CD8-positive, alpha-beta T cell (primary cell): ENCODE measurements at regions of chr1 and their contacts with region 1.

Region 1: DNA sequence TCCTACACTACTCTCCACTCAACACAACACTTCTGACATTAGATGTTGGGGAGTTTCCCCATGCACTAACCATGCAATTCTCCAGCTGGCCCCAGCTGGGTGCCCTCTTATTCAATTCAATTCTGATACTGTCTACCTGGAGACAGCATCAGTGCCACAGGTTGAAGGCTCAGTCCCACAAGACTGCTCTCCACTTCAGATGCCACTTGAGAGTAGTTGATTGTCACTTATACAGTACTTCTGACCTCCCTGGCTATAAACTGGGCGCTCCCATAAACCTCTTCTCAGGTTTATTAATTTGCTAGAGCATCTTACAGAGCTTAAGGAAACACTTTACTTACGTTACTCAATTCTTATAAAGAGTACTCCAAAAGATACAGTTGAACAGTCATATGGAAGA is 442.3 kb downstream of the LRRIQ3 start:
- DNase-seq: no peak
- ATAC-seq: no peak
- H3K4me3 ChIP-seq: no peak overlapping the region
- H3K4me3 Mint-ChIP-seq: no peak overlapping the region
- H3K27ac ChIP-seq: no peak overlapping the region
- H3K27ac Mint-ChIP-seq: no peak overlapping the region
- H3K4me1 ChIP-seq: no peaks in the 10 kb centered on the region
- H3K4me1 Mint-ChIP-seq: no peaks in the 10 kb centered on the region
- H3K27me3 ChIP-seq: no peaks in the 10 kb centered on the region
- H3K27me3 Mint-ChIP-seq: no peaks in the 10 kb centered on the region
- CTCF ChIP-seq: no peak

Region 2: DNA sequence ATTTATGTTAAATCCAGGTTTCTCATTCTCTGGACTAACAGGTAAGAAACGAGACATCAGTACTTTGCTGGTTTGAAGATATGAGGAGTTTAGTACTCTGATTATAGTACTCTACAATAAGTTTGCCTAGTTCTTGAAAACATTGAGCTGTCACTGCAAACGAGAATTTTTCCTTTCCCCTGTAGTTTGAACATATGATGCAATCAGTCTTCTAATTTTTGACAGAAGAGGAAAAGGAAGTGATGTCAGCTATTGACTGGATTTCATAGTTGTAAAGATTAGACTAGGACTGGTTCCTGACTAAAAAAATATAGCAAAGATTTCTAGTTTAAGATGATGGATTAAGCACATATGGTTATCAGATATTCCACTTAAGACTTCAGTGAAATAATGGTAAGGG is 19.5 kb before region 1 on chr1:
- CTCF ChIA-PET with region 1: no interaction called
- POLR2A ChIA-PET with region 1: no interaction called
- intact Hi-C with region 1: loop called in 1 of 2 experiments (anchors 2 kb)
- DNase-seq: no peak
- ATAC-seq: no peak
- H3K4me3 ChIP-seq: no peak overlapping the region
- H3K4me3 Mint-ChIP-seq: no peak overlapping the region
- H3K27ac ChIP-seq: no peak overlapping the region
- H3K27ac Mint-ChIP-seq: no peak overlapping the region
- H3K4me1 ChIP-seq: no peaks in the 10 kb centered on the region
- H3K4me1 Mint-ChIP-seq: no peaks in the 10 kb centered on the region
- H3K27me3 ChIP-seq: no peaks in the 10 kb centered on the region
- H3K27me3 Mint-ChIP-seq: no peaks in the 10 kb centered on the region
- CTCF ChIP-seq: no peak

Region 3: GRCh38 chr1:73813716-73814115 is 58.1 kb after region 1 on chr1:
- CTCF ChIA-PET with region 1: no interaction called
- POLR2A ChIA-PET with region 1: no interaction called
- intact Hi-C with region 1: no loop called
- DNase-seq: no peak
- ATAC-seq: no peak
- H3K4me3 ChIP-seq: no peak overlapping the region
- H3K4me3 Mint-ChIP-seq: no peak overlapping the region
- H3K27ac ChIP-seq: no peak overlapping the region
- H3K27ac Mint-ChIP-seq: no peak overlapping the region
- H3K4me1 ChIP-seq: no peaks in the 10 kb centered on the region
- H3K4me1 Mint-ChIP-seq: no peaks in the 10 kb centered on the region
- H3K27me3 ChIP-seq: no peaks in the 10 kb centered on the region
- H3K27me3 Mint-ChIP-seq: no peaks in the 10 kb centered on the region
- CTCF ChIP-seq: no peak

Region 4: GRCh38 chr1:73874806-73875205 is 119.2 kb after region 1 on chr1:
- CTCF ChIA-PET with region 1: no interaction called
- POLR2A ChIA-PET with region 1: no interaction called
- intact Hi-C with region 1: no loop called
- DNase-seq: no peak
- ATAC-seq: no peak
- H3K4me3 ChIP-seq: no peak overlapping the region
- H3K4me3 Mint-ChIP-seq: no peak overlapping the region
- H3K27ac ChIP-seq: no peak overlapping the region
- H3K27ac Mint-ChIP-seq: no peak overlapping the region
- H3K4me1 ChIP-seq: no peaks in the 10 kb centered on the region
- H3K4me1 Mint-ChIP-seq: no peaks in the 10 kb centered on the region
- H3K27me3 ChIP-seq: no peaks in the 10 kb centered on the region
- H3K27me3 Mint-ChIP-seq: no peaks in the 10 kb centered on the region
- CTCF ChIP-seq: no peak